ENCODE measurements at regions of chr3 and their contacts with region 1.

Region 1: DNA sequence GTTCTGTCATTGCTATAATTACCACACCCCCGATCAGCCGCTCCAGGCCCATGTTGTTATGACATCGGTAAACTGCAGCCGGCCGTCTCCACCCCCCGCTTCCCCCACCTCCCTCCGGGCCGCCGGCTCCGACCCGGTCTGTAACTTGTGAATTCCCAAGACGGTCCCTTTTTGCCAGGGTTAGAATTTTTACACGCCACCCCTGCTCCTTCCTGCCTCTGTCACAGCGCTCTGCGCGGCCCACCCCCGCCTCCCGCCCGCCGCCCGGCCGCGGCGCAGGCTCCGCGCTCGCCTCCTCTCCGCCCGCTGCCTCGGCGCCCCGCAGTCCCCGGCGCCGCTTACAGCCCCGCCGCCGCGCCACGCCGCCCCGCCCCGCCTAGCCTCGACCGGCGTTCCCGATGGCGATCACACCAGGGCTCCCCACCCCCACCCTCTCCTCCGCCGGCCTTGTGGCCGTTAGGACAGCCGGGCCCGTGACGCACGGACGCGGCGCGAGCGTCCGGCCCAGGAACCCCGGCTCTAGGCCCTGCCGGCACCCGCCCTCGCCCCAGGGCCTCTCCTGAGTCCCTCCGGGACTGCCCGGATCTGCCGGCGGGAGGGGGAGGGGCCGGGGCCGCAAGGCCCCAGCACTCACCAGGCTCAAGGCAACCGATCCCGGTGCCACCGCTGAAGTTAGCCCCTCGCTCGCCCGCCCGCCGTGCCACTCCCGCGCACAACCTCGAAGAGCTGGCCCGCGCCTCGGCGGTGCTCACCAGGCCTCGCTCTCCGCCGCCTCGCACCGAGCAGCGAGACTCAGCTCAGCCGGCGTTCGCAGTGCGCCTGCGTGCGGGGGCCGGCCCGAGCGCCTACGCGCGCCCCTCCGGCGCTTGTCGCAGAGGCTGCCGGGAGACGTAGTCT is at the start of gene KPNA1:
- DNase-seq: peak; percentile 92 to 95
- ATAC-seq: peak; percentile 98
- H3K4me3 ChIP-seq: peak within 1 kb of the TSS; percentile 55 to 81
- H3K27ac ChIP-seq: peak within 1 kb of the TSS; percentile 28 to 83
- H3K4me1 ChIP-seq: no peaks in the 10 kb centered on the region
- H3K27me3 ChIP-seq: no peaks in the 10 kb centered on the region
- total RNA-seq, gene KPNA1: 71.8 to 74.1 TPM

Region 2: DNA sequence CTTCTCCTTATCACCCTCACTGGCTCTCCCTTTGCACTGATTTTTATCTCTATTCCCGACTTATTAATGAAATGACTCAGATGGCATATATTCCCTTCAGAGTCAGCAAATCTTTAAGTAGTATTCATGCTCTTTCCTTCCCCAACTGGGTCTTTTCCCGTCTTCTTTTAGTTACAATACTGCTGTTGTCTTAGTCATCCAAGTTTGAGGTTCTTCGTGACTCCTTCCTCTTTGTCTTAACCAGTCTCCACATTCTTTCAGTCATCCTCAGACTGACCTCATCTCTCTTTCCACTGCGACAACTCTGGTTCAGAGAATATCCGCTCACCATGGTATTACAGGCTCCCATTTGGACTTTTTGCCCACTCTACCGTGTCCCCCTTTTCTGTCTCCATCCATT is 110.9 kb before region 1 on chr3:
- intact Hi-C with region 1: no loop called
- DNase-seq: no peak
- ATAC-seq: no peak
- H3K4me3 ChIP-seq: no peak overlapping the region
- H3K27ac ChIP-seq: no peak overlapping the region
- H3K4me1 ChIP-seq: no peaks in the 10 kb centered on the region
- H3K27me3 ChIP-seq: no peaks in the 10 kb centered on the region

Region 3: DNA sequence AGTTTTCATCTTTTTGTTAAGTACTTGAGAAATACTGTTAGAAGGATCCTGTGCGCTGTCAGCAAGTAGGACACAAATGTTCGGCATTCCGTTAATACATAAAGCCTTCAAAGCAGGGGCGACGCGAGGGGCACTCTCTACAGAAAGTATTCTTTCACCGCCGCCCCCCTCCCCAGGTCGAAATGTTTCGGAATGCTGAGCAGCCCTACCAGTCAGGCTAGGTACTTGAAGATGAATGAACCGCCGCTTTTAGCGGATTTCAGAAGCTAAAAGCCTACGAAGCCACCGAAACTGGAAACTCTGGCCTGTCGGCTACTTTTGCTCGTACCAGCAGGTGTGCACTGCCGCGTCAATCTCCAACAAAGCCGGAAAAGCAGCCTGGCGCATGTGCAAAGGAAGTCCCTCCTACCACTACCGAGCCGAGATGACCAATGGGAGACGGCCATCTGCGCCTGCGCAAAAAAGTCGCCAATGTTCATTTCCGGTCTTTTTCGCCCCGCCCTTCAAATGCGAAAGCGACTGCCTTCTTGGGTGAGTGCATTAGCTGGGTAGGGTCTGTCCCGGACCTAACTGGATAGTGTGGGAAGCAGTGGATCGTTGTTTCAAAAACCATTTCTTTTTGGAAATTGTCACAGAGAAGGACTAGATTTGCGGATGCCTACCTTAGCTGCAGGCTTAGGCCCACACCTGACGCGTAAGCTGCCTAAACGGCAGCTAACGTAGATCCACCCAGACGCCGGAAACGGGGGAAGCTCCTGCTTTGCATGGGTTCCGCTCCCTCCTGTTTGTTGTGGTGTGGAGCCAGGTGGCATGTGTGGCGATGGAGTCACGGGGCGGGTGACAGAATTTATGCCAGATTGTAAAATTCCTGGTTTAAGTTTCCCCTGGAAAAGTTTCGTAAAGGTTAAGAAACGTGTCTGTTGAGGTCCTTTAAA is 98.4 kb before region 1 on chr3 and contains the start of gene WDR5B:
- intact Hi-C with region 1: loop called in 1 of 2 experiments (anchors 1 kb)
- DNase-seq: peak; percentile 98 to 99
- ATAC-seq: peak; percentile 97
- H3K4me3 ChIP-seq: peak within 1 kb of the TSS; percentile 80 to 93
- H3K27ac ChIP-seq: peak within 1 kb of the TSS; percentile 69 to 89
- H3K4me1 ChIP-seq: peaks cover 0 to 4% of the 10 kb centered on the region in 2 donors
- H3K27me3 ChIP-seq: no peaks in the 10 kb centered on the region
- total RNA-seq, gene WDR5B: 4.2 to 4.3 TPM

Measured in aorta (tissue), 5 donors.